ENCODE measurements at regions of chr2 and their contacts with region 1.

Region 1: DNA sequence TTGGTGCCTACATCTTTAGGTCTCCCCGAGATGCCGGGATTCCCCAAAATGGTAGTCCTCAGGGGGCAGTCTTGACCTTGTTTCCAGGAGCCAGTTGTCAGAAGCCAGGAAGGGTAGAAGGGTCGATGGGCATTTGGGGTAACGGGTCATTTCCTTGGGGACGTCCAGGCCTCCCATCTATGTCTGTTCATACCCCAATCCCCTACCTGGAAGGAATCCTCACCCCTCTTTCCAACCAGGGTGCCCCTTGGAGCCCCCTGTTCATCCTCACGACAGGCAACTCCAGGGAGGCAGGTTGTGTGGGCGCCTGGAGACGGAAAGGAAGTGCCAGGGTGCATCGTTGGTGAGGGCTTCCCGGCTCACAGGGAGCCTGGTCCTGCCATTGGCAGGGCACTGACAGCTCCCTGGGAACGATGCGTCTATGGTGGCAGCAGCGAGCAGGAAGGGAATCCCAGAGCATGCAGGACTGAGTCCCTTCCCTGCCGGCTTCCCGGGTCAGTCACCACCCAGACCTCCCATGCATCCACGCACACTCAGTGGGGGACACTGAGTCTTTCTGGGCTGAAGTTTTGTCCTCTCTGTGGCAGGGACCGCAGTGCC is 117.5 kb downstream of the INHBB start:
- DNase-seq: no peak
- H3K4me3 ChIP-seq: no peak overlapping the region
- H3K27ac ChIP-seq: no peak overlapping the region
- H3K4me1 ChIP-seq: no peaks in the 10 kb centered on the region
- H3K27me3 ChIP-seq: no peaks in the 10 kb centered on the region
- CTCF ChIP-seq: no peak

Region 2: DNA sequence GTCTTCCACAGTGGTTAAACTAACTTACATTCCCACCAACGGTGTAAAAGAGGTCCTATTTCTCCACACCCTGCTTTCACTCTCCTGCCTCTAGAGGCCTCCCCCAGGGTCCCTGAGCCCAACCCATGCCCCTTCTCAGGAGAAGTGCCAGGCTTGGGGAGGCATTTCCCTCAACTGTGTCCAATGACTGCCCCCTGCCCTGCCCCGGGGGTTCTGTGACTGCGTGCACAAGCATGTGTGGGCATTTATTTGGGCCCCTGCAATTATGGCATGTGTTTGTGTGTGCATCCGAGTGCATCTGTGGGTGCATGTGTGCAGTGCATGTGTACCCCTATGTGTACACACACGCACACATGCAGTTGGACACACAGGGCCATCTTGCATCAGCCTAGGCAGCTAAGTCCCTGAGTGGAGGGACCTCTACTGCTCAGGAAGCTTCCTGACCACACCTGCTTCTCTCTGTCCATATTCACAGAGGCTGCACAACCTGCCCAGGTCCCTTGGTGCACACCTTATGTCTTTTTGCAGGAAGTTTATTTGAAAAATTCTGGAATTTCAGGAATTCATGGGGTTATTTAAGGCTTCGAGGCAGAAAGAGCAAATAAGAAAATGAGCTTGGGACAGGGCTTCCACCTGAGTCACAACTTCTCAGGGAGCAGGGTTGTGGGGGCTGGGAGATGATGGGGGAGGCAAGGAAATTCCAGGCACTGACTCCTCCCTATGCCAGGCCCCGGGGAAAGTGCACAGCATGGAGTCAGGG is 60.0 kb before region 1 on chr2:
- CTCF ChIA-PET with region 1: no interaction called
- dilution Hi-C with region 1: loop called (anchors 5 kb)
- in situ Hi-C with region 1: no loop called
- intact Hi-C with region 1: no loop called
- DNase-seq: no peak
- H3K4me3 ChIP-seq: no peak overlapping the region
- H3K27ac ChIP-seq: no peak overlapping the region
- H3K4me1 ChIP-seq: no peaks in the 10 kb centered on the region
- H3K27me3 ChIP-seq: no peaks in the 10 kb centered on the region
- CTCF ChIP-seq: no peak

Region 3: GRCh38 chr2:120503793-120504571 is 40.6 kb after region 1 on chr2:
- CTCF ChIA-PET with region 1: no interaction called
- dilution Hi-C with region 1: no loop called
- in situ Hi-C with region 1: no loop called
- intact Hi-C with region 1: no loop called
- DNase-seq: no peak
- H3K4me3 ChIP-seq: no peak overlapping the region
- H3K27ac ChIP-seq: no peak overlapping the region
- H3K4me1 ChIP-seq: peaks cover 16% of the 10 kb centered on the region
- H3K27me3 ChIP-seq: no peaks in the 10 kb centered on the region
- CTCF ChIP-seq: no peak

Region 4: DNA sequence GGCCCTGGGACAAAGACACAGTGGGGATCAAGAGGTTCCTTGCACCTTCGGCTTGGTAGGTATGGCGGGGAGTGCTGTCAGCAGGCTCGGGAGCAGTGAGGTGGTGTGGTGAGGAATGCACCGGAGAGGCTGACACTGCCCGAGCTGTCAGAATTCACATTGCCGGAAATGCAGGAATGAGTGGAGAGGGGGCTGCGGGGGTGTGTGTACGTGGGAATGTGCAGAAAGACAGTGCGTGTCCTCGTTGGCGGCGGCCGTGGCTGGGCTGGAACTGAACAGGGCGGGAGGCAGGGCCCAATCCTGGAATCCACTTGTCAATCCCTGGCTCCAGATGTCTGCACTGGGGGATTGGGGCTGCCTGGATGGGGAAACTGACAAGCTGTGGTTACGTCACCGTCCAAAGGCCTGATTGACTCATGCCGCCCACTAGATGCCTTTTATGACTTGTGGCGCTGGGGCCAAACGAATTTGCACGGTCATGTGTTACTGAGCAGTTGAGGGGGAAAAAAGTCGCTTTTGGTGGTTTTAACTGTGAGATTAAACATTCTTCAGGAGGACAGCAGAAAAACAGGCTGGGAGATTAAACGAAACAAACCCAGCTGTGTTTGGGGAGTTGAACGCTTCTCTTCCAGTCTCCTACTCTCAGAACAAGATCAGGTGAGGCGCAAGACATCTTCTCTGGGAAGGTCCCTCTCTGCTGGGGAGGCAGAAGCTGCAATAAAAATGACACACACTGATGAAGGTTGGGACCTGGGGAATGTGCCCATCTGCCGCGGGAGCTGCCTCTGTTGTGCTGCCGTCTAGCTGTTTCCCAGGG is 82.8 kb after region 1 on chr2:
- CTCF ChIA-PET with region 1: no interaction called
- dilution Hi-C with region 1: loop called (anchors 5 kb)
- in situ Hi-C with region 1: no loop called
- intact Hi-C with region 1: no loop called
- DNase-seq: no peak
- H3K4me3 ChIP-seq: no peak overlapping the region
- H3K27ac ChIP-seq: no peak overlapping the region
- H3K4me1 ChIP-seq: peaks cover 3% of the 10 kb centered on the region
- H3K27me3 ChIP-seq: no peaks in the 10 kb centered on the region
- CTCF ChIP-seq: no peak

Region 5: DNA sequence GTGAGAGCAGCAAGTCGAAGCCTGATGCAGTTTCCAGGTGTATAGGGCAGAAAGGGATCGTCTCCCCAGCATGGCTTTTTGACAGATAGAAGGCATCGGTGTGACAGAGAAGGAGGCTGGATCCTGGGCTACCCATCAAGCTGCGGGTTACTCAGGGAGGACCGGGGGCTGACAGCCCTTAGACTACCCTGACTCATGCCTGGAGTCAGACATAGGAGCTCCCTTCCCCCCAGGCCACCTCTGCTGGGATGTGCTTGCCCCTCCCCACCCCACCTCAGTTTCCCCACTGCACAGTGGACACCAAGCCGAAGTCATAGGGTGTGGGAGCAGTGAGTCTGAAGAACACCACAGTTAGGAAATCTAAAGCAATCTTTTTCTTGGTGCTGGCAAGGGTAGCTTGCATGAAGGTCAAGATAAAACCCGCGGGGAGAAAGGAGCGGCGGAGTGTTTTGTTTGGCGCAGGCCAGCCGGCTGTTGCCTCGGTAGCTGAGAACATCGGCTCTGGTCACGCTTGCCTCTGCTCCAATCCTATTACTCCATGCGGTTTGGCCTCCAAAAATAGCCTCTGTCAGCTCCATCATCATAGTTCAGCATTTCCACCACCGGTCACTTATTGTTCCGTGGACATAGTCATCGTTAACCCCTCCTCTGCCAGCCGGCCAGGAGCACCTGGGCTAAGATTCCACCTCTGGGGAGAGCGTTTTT is 103.1 kb after region 1 on chr2:
- CTCF ChIA-PET with region 1: no interaction called
- dilution Hi-C with region 1: no loop called
- in situ Hi-C with region 1: no loop called
- intact Hi-C with region 1: no loop called
- DNase-seq: no peak
- H3K4me3 ChIP-seq: no peak overlapping the region
- H3K27ac ChIP-seq: no peak overlapping the region
- H3K4me1 ChIP-seq: no peaks in the 10 kb centered on the region
- H3K27me3 ChIP-seq: no peaks in the 10 kb centered on the region
- CTCF ChIP-seq: no peak